Activated naive CD4-positive, alpha-beta T cell treated with anti-CD3 and anti-CD28 coated beads for 36 hours (primary cell): ENCODE measurements at regions of chr21 and their contacts with region 1.

Region 1: GRCh38 chr21:14533504-14534428 is 12.3 kb downstream of the SAMSN1 start:
- DNase-seq: no peak
- H3K4me3 Mint-ChIP-seq: peak overlapping the region; percentile 74
- H3K27ac Mint-ChIP-seq: peak overlapping the region; percentile 96
- H3K4me1 Mint-ChIP-seq: peaks cover 77% of the 10 kb centered on the region
- H3K27me3 Mint-ChIP-seq: no peaks in the 10 kb centered on the region

Region 2: GRCh38 chr21:14086553-14086952 is 447.2 kb before region 1 on chr21:
- CTCF ChIA-PET with region 1: no interaction called
- intact Hi-C with region 1: loop called (anchors 10 kb)
- DNase-seq: peak; percentile 49
- H3K4me3 Mint-ChIP-seq: no peak overlapping the region
- H3K27ac Mint-ChIP-seq: peak overlapping the region; percentile 70
- H3K4me1 Mint-ChIP-seq: peaks cover 29% of the 10 kb centered on the region
- H3K27me3 Mint-ChIP-seq: no peaks in the 10 kb centered on the region

Region 3: DNA sequence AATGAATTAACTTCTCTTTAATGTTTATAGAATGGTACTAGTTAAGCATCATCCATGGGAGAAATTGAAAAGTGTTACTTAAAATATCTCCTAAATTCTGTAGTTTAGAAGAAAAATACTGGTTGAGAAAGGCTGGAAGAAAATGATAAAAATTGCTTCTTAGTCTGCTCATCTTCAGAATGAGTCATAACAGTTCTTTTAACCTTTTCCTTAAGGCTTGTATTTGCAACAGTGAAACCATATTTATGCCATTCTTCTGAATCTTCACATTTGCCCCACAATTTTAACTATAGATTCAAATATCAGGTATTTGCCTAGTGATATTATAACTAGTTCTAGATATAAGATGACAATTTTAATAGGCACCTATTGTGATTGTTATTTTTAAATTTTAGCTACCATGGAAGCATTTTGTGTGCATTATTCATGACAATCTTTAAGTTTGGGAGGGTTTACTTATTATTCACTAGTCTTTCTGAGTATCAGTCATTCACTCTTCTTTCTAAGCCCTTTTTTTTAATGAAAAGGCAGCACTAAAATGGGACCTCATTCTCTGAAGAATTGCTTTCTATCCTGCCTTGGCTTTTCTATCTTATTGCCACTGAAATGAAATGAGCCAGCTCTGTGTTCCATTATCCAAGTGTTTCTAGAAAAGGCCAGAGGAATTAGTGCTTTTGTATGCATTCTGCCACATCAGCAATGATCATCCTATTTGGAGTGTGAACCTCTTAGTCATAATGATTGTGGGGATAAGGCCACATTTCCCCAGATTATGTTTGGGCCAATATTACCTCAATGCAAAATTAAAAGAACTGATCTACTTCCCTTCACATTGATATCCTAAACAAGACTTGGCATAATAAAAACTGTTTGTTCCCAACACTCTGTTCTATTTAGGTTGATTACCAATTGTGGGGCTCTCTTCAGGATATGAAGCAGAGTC is 46.0 kb before region 1 on chr21:
- CTCF ChIA-PET with region 1: no interaction called
- intact Hi-C with region 1: loop called (anchors 1 kb)
- DNase-seq: no peak
- H3K4me3 Mint-ChIP-seq: no peak overlapping the region
- H3K27ac Mint-ChIP-seq: peak overlapping the region; percentile 81
- H3K4me1 Mint-ChIP-seq: peaks cover 51% of the 10 kb centered on the region
- H3K27me3 Mint-ChIP-seq: no peaks in the 10 kb centered on the region

Region 4: DNA sequence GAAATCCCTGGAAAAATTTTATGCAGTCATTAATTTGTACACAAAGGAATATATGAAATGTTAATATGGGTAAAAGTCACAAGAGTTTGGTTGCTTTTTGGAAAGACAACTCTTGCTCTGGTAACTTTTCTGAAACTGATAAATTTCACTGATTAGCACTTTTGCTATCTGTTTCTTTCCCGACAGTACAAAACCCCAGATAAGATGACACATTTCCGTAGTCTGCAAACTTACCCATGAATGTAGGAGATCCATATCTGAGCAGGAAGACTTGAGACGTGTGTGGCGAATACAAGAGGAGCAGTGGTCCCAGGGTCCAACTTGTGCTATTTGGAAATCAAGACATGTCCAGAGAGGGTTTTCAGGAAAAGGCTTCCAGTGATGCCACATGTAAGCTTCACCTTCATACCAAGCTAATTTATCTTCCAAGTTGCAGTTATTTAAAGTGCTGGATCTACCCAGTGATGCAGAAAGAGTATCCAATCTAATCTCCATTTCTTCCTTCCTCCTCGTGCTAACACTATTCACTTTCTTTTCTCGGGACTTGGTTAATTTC is 48.2 kb after region 1 on chr21:
- CTCF ChIA-PET with region 1: interaction called, 4 read pairs
- intact Hi-C with region 1: loop called (anchors 2 kb)
- DNase-seq: no peak
- H3K4me3 Mint-ChIP-seq: peak overlapping the region; percentile 20
- H3K27ac Mint-ChIP-seq: no peak overlapping the region
- H3K4me1 Mint-ChIP-seq: peaks cover 13% of the 10 kb centered on the region
- H3K27me3 Mint-ChIP-seq: no peaks in the 10 kb centered on the region

Region 5: DNA sequence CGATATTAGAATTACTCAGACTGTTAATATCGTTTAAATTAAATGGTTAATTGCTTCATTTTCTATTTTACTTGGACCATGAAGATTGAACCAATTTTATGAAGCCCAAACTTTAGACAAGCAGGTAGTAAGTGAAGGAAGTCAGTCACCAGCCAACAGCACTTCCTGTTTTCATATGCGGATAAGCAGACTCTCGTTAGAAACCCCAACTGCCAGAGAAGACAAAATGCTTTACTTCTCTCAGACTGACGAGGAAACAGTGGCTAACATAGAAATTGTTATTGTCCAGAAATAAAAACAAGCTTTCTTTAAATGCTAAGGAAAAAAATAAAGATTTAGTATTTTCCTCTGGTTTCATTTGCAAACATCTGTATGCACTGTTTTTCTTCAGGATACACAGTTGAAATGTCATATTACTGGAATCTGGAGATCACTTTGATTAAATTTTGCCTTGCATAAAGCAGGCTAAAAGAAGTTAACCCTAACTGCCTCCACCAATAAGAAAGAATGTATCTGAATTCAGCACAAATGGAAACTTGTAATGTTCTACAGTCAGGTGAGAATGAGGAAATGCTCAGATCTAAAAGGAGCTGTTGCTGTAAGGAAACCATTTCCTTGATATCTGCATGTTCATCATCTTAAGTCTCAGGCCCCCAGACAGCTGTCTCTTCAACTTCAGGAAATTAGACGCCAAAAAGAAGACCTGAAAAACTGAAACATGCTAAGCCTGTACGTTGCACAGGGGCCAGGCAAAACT is 142.2 kb after region 1 on chr21:
- CTCF ChIA-PET with region 1: no interaction called
- intact Hi-C with region 1: loop called (anchors 2 kb)
- DNase-seq: peak; percentile 28
- H3K4me3 Mint-ChIP-seq: peak overlapping the region; percentile 63
- H3K27ac Mint-ChIP-seq: peak overlapping the region; percentile 91
- H3K4me1 Mint-ChIP-seq: peaks cover 40% of the 10 kb centered on the region
- H3K27me3 Mint-ChIP-seq: no peaks in the 10 kb centered on the region

Region 6: DNA sequence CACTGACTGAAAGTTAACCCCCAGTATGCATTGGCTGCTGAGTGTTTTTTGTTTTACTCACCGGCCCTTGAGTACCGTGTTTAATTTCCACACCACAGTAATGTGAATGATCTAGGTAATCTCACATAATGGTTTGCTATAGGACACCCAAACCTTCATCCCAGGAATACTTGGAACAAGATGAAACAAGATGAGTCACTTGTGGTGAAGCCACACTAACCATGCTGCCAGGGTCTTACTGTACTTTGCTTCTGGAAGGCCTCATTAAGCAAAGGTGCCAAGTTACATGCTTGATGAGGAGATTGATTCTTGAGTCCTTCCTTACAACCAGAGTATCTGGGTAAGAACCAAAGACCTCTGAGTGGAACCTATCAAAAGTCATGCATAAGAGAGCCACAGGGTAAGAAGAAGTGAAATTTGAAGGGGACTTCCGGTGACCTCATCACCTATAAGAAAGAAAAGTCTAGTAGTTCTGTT is 367.8 kb after region 1 on chr21:
- CTCF ChIA-PET with region 1: no interaction called
- intact Hi-C with region 1: no loop called
- DNase-seq: peak; percentile 16
- H3K4me3 Mint-ChIP-seq: no peak overlapping the region
- H3K27ac Mint-ChIP-seq: no peak overlapping the region
- H3K4me1 Mint-ChIP-seq: peaks cover 16% of the 10 kb centered on the region
- H3K27me3 Mint-ChIP-seq: no peaks in the 10 kb centered on the region

Region 7: GRCh38 chr21:14968821-14969220 is 435.1 kb after region 1 on chr21:
- CTCF ChIA-PET with region 1: no interaction called
- intact Hi-C with region 1: no loop called
- DNase-seq: no peak
- H3K4me3 Mint-ChIP-seq: no peak overlapping the region
- H3K27ac Mint-ChIP-seq: no peak overlapping the region
- H3K4me1 Mint-ChIP-seq: peaks cover 3% of the 10 kb centered on the region
- H3K27me3 Mint-ChIP-seq: no peaks in the 10 kb centered on the region